HCT116 (cell line): ENCODE measurements at regions of chr16 and their contacts with region 1.

Region 1: DNA sequence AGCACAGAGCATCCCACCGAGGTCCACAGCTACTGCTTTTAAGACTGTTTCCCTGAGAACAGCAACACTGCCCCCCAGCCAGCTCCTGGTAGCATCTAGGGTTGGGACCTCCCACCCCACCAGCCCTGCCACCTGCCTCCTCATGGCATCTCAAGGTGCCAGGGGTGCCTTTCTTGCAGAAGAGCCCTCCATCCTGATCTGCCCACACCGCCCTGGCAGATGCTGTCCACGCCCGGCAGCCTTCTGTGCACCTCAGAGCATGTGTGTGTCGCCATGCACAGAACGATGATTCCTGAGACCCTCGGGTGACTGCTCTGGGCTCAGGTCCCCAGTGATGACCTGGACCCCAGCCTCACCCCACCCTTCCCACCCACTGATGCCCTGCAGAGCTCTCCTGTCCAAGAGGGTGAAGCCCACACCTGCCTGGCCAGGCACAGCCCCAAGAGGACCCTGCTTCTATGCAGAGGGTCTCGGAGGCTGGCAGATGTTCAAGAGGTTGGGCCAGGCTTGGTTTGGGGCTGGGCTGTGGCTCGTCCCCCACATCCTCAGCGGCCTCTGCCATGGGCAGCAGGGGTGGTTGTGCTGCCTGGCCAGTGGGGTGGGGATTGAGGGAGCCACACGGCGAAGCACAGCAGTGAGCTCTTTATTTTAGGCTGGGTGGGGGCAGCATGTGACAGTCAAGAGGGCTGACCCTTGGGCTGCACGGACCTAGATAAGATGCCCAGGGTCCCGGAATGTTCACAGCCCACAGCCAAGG is 5.2 kb upstream of the SPATA2L start:
- DNase-seq: no peak
- ATAC-seq: no peak
- H3K4me3 ChIP-seq: peak overlapping the region; percentile 36 to 37
- H3K27ac ChIP-seq: peak overlapping the region; percentile 37; the same call in 1 of the 2 replicates
- H3K4me1 ChIP-seq: peaks cover 10 to 24% of the 10 kb centered on the region in 2 experiments; a peak in 3 of 4 replicates
- H3K27me3 ChIP-seq: no peaks in the 10 kb centered on the region
- CTCF ChIP-seq: no peak
- POLR2A ChIP-seq: no peak
- RAD21 ChIP-seq: no peak

Region 2: DNA sequence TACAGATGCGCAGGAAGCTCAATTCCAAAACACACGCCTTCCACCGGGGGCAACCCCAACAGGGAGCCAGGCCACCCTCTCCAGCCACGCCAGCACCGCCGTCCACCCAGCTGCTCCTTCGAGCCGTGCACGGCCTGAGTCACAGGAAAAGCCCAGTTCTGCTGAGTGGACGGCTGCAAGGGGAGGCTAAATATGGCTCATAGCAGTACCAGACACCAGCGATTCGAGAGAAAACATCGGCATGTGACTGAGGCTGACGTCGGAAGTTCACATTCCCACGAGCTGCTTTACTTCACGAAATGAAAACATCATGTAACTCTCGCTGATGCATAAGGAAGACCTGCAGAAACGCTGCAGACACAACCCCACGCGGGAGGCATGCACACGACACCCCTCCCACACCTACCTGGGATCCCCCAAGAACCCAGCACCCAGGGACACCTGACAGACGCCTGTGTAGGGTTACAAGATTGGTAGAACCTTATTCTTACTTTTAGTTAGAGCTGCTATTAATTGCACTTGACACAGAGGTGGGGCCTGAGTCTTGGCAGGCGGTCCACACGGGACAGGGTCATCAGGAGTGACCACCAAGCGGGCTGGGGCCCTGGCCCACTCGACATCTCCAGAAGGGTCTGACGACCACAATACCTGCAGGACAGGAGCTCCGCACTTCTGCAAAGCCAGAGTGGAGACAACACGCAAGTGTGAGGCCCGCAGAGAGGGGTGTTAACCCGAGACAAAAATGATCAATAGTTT is 333.2 kb before region 1 on chr16:
- CTCF ChIA-PET with region 1: no interaction called
- POLR2A ChIA-PET with region 1: no interaction called
- RAD21 ChIA-PET with region 1: no interaction called
- intact Hi-C with region 1: no loop called
- DNase-seq: no peak
- ATAC-seq: no peak; the same call in 1 of the 2 replicates
- H3K4me3 ChIP-seq: no peak overlapping the region
- H3K27ac ChIP-seq: no peak overlapping the region
- H3K4me1 ChIP-seq: peaks cover 13 to 27% of the 10 kb centered on the region in 2 experiments
- H3K27me3 ChIP-seq: no peaks in the 10 kb centered on the region
- CTCF ChIP-seq: 0 out of 6 replicates have a peak, but pooled peaks of 1 of the 3 experiments have one; percentile 10
- POLR2A ChIP-seq: no peak
- RAD21 ChIP-seq: no peak

Region 3: GRCh38 chr16:89793955-89794354 is 87.3 kb after region 1 on chr16:
- CTCF ChIA-PET with region 1: interaction called, 27 read pairs
- POLR2A ChIA-PET with region 1: no interaction called
- RAD21 ChIA-PET with region 1: no interaction called
- intact Hi-C with region 1: loop called (anchors 1 kb)
- DNase-seq: no peak
- ATAC-seq: no peak
- H3K4me3 ChIP-seq: no peak overlapping the region
- H3K27ac ChIP-seq: no peak overlapping the region
- H3K4me1 ChIP-seq: no peaks in the 10 kb centered on the region
- H3K27me3 ChIP-seq: no peaks in the 10 kb centered on the region
- CTCF ChIP-seq: no peak
- POLR2A ChIP-seq: no peak
- RAD21 ChIP-seq: no peak

Region 4: GRCh38 chr16:89860747-89861304 is 154.1 kb after region 1 on chr16:
- CTCF ChIA-PET with region 1: interaction called, 20 read pairs
- POLR2A ChIA-PET with region 1: no interaction called
- RAD21 ChIA-PET with region 1: no interaction called
- intact Hi-C with region 1: loop called (anchors 2 kb)
- DNase-seq: peak; percentile 51
- ATAC-seq: peak; percentile 98
- H3K4me3 ChIP-seq: no peak overlapping the region
- H3K27ac ChIP-seq: no peak overlapping the region
- H3K4me1 ChIP-seq: peaks cover 8 to 9% of the 10 kb centered on the region in 2 experiments
- H3K27me3 ChIP-seq: no peaks in the 10 kb centered on the region
- CTCF ChIP-seq: peak; percentile 94 to 100 (median 100)
- POLR2A ChIP-seq: no peak
- RAD21 ChIP-seq: peak; percentile 100

Region 5: GRCh38 chr16:89873972-89874689 is 167.4 kb after region 1 on chr16:
- CTCF ChIA-PET with region 1: interaction called, 11 read pairs
- POLR2A ChIA-PET with region 1: interaction called, 8 read pairs
- RAD21 ChIA-PET with region 1: interaction called, 3 to 4 read pairs
- intact Hi-C with region 1: no loop called
- DNase-seq: peak; percentile 94
- ATAC-seq: peak; percentile 76
- H3K4me3 ChIP-seq: peak overlapping the region; percentile 87 to 91
- H3K27ac ChIP-seq: peak overlapping the region; percentile 100
- H3K4me1 ChIP-seq: peaks cover 12 to 23% of the 10 kb centered on the region in 2 experiments
- H3K27me3 ChIP-seq: no peaks in the 10 kb centered on the region
- CTCF ChIP-seq: no peak
- POLR2A ChIP-seq: no peak
- RAD21 ChIP-seq: no peak

Region 6: DNA sequence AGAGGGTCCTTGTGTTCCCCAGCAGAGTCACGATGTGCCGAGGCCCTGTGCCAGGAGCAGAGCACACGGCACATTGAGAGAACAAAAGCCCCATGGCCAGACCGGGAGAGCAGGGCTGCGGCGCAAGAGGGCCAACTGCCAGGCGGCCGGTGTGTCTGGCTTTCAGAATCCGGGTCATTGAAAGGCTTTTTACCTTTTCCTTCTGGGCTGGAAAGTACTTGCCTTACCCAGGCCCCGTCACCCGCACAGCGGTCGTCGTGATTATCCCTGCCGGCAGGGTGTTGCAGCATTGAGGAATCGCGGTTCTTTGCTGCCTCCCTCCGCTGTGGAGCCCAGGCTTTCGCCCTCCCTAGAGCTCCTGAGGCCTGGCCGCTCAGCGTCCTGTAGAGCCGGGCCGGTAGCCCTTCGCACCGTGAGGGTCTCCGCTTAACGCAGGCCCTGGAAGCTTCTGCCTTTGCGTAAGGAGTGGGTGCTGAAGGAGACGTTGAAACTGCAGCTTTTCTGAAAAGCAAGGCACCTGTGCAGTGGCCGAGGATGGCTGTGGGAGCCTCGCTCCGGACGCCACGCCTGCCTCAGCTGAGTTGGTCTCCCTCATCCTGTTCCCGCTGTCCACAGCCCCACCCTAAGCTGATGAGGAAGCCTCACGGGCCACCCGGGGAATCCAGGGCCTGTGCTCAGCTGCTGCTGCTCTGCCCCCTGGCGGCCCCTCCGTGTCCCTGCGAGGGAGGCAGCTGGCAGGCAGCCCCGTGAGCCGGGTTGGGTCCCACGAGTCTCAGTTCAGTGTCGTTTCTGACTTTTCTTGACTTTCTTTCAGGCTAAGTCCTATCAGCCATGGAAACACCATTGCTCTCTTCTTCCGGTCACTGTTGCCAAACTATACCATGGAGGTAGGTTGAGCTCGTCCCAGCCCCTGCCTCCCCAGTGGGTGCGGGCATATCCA is 203.4 kb after region 1 on chr16:
- CTCF ChIA-PET with region 1: interaction called, 12 read pairs
- POLR2A ChIA-PET with region 1: interaction called, 4 read pairs
- RAD21 ChIA-PET with region 1: interaction called, 3 to 4 read pairs
- intact Hi-C with region 1: no loop called
- DNase-seq: peak; percentile 42
- ATAC-seq: peak; percentile 86
- H3K4me3 ChIP-seq: no peak overlapping the region
- H3K27ac ChIP-seq: peak overlapping the region; percentile 12; the same call in 1 of the 2 replicates
- H3K4me1 ChIP-seq: peaks cover 4 to 11% of the 10 kb centered on the region in 2 experiments; a peak in 3 of 4 replicates
- H3K27me3 ChIP-seq: no peaks in the 10 kb centered on the region
- CTCF ChIP-seq: peak in 2 of 3 experiments; percentile 99 to 100; a peak in 4 of 6 replicates
- POLR2A ChIP-seq: no peak
- RAD21 ChIP-seq: no peak